ENCODE measurements at regions of chr5 and their contacts with region 1.

Region 1: GRCh38 chr5:169070407-169070806 is 230.5 kb downstream of the SLIT3 start:
- DNase-seq: no peak
- H3K4me3 ChIP-seq: no peak overlapping the region
- H3K27ac ChIP-seq: no peak overlapping the region
- H3K4me1 ChIP-seq: no peaks in the 10 kb centered on the region
- H3K27me3 ChIP-seq: no peaks in the 10 kb centered on the region
- CTCF ChIP-seq: no peak
- POLR2A ChIP-seq: no peak

Region 2: GRCh38 chr5:169106911-169107706 is 36.7 kb after region 1 on chr5:
- intact Hi-C with region 1: loop called (anchors 2 kb)
- DNase-seq: no peak
- H3K4me3 ChIP-seq: no peak overlapping the region
- H3K27ac ChIP-seq: peak overlapping the region in 1 of 2 donors; percentile 19
- H3K4me1 ChIP-seq: no peaks in the 10 kb centered on the region
- H3K27me3 ChIP-seq: no peaks in the 10 kb centered on the region
- CTCF ChIP-seq: no peak
- POLR2A ChIP-seq: no peak